ENCODE measurements at regions of chr1 and their contacts with region 1.

Region 1: GRCh38 chr1:207885129-207886032 is 25.5 kb downstream of the CD34 start:
- DNase-seq: peak; percentile 86
- ATAC-seq: peak; percentile 72
- H3K4me3 Mint-ChIP-seq: no peak overlapping the region
- H3K27ac Mint-ChIP-seq: peak overlapping the region; percentile 95
- H3K4me1 Mint-ChIP-seq: peaks cover 30% of the 10 kb centered on the region
- H3K27me3 Mint-ChIP-seq: peaks cover 2% of the 10 kb centered on the region
- CTCF ChIP-seq: peak; percentile 98

Region 2: GRCh38 chr1:207797229-207797961 is 88.0 kb before region 1 on chr1:
- CTCF ChIA-PET with region 1: interaction called, 14 read pairs
- POLR2A ChIA-PET with region 1: interaction called, 3 read pairs
- intact Hi-C with region 1: no loop called
- DNase-seq: peak; percentile 92
- ATAC-seq: peak; percentile 91
- H3K4me3 Mint-ChIP-seq: no peak overlapping the region
- H3K27ac Mint-ChIP-seq: peak overlapping the region; percentile 11
- H3K4me1 Mint-ChIP-seq: peaks cover 36% of the 10 kb centered on the region
- H3K27me3 Mint-ChIP-seq: no peaks in the 10 kb centered on the region
- CTCF ChIP-seq: peak; percentile 76

Region 3: DNA sequence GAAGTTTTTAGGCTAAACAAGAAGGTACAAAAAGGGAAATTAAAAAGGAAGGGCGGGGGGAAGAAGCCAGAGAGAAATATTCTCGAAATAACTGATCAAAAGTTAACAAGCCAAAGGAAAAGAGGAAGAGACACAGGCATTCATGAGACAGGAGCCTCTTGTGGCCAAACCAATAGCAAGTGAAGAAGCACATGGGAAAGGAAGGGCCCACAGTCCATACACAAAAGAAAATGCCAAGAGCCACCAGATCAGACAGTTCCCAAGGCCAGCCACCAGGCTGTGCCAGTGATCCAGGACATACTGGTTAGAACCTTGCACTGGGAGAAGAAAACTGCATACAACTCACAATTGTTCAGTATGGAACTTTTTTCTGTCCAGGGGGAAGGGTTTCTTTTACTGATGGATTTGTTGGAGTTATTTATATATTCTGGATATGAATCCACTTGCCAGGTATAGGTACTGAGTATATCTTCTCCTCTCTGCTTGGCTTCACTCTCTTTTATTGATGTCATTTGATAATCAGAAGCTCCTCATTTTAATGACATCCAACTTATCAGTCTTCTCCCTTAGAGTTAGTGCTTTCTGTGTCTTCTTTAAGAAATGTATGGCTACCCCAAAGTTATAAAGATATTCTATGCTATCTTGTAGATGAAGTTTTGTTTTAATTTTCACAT is 56.8 kb before region 1 on chr1:
- CTCF ChIA-PET with region 1: interaction called, 63 read pairs
- POLR2A ChIA-PET with region 1: interaction called, 14 read pairs
- intact Hi-C with region 1: no loop called
- DNase-seq: peak; percentile 73
- ATAC-seq: no peak
- H3K4me3 Mint-ChIP-seq: no peak overlapping the region
- H3K27ac Mint-ChIP-seq: peak overlapping the region; percentile 73
- H3K4me1 Mint-ChIP-seq: peaks cover 96% of the 10 kb centered on the region
- H3K27me3 Mint-ChIP-seq: no peaks in the 10 kb centered on the region
- CTCF ChIP-seq: peak; percentile 71

Region 4: DNA sequence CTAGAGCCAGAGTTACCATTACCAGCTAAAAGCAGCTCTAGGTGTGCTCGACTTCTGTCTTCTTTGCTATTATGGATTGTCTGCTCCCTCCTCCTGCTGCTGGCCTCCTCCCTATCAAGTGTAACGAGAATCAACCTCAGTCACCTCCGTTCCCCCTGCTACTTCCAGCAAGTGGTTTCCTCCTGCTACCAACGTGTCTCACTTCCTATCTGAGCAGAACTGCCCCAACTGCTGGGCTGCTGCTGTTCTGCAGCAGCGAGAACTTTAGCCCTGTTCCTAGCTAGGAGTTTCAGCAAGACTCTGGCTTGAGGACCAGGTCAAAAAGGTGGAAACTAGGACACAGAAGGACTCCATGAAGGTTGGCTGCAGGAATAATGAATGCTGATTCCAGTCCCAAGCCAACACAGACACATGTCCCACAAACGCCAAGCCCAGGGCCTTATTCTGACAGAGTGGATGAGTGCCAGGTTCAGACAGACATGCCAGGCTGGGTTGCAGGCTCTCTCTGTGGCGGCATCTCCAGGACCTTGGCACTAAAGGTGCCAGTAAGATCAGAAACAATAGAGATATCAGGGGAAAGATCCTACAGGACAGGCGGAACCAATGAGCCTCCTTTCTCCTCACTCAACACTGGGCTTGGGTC is 21.4 kb before region 1 on chr1:
- CTCF ChIA-PET with region 1: interaction called, 285 read pairs
- POLR2A ChIA-PET with region 1: interaction called, 12 read pairs
- intact Hi-C with region 1: no loop called
- DNase-seq: peak; percentile 70
- ATAC-seq: peak; percentile 57
- H3K4me3 Mint-ChIP-seq: peak overlapping the region; percentile 50
- H3K27ac Mint-ChIP-seq: peak overlapping the region; percentile 87
- H3K4me1 Mint-ChIP-seq: peaks cover 65% of the 10 kb centered on the region
- H3K27me3 Mint-ChIP-seq: no peaks in the 10 kb centered on the region
- CTCF ChIP-seq: peak; percentile 14

Region 5: DNA sequence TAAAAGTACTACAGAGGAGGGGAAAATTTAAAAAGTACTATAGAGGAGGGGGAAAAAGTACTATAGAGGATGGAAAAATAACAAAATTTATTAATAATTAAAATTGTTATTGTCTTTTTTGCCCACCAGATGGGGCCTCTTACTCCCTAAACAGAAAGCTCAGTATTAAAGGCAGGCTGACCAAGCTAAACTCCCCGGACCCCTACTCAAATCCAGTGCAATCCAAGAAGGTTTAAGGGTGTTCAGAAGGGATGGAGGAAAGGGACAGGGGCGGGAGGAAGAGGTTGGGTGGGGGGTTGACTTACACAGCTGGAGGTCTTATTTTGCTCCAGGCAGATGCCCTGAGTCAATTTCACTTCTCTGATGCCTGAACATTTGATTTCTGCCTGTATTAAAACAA is 11.8 kb after region 1 on chr1:
- CTCF ChIA-PET with region 1: interaction called, 87 read pairs
- POLR2A ChIA-PET with region 1: no interaction called
- intact Hi-C with region 1: no loop called
- DNase-seq: no peak
- ATAC-seq: no peak
- H3K4me3 Mint-ChIP-seq: no peak overlapping the region
- H3K27ac Mint-ChIP-seq: no peak overlapping the region
- H3K4me1 Mint-ChIP-seq: no peaks in the 10 kb centered on the region
- H3K27me3 Mint-ChIP-seq: no peaks in the 10 kb centered on the region
- CTCF ChIP-seq: no peak

Region 6: DNA sequence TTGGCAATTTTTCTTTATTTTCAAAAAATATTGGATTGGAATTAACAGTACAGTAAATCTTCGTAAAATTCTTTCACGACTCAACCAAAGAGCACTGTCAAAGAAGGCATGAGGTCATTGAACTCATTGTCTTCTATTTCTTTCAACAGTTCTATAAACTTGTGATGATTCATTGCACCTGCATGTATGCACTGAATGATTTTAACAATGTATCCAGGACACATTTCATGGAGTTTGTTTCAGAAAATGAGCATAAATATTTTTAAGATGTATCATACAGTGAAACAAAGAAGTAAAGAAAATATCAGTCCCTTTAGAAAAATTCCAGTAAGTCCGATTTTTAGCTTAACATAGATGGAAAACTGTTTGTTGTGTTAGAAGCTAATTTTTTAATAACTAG is 59.2 kb after region 1 on chr1:
- CTCF ChIA-PET with region 1: interaction called, 27 read pairs
- POLR2A ChIA-PET with region 1: interaction called, 3 read pairs
- intact Hi-C with region 1: no loop called
- DNase-seq: no peak
- ATAC-seq: no peak
- H3K4me3 Mint-ChIP-seq: no peak overlapping the region
- H3K27ac Mint-ChIP-seq: no peak overlapping the region
- H3K4me1 Mint-ChIP-seq: no peaks in the 10 kb centered on the region
- H3K27me3 Mint-ChIP-seq: peaks cover 11% of the 10 kb centered on the region
- CTCF ChIP-seq: no peak

Region 7: DNA sequence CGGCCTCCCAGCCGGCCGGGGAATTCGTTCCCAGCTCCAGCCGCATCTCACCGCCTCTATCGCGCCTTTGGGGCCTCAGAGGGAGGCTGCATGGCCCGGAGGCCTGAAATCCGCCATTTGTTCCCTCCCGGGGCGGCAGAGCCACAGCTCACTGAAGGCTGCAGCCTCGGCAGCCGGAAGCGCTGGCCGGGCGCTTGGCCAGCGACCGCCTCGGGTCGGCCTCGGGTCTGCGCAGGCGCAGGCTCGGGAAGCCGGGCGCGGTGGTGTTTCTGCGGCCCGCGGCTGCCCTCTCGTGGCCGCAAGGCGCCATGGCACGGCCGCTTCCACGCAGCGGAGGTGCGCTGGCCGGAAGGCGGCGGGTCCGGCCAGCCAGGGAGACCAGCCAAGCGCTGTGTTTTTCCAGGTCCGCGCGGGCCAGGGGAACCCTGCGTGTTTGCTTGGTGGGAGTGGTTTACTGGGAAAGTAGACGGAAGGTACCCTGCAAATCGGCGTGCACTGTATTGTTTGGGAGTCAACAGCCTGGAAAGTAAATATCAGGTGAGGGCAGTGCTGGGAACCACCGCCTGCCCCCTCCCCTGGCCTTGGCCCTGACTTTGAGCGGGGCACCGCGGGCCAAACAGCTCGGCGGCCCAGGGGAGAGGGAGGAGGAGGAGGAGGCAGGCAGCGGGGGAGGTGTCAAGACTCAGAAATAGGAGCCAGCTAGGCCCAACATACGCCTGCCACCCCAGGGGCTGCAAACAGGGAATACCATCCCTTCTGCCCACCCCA is 78.2 kb after region 1 on chr1:
- CTCF ChIA-PET with region 1: interaction called, 253 read pairs
- POLR2A ChIA-PET with region 1: no interaction called
- intact Hi-C with region 1: loop called (anchors 2 kb)
- DNase-seq: peak; percentile 85
- ATAC-seq: peak; percentile 91
- H3K4me3 Mint-ChIP-seq: peak overlapping the region; percentile 77
- H3K27ac Mint-ChIP-seq: peak overlapping the region; percentile 77
- H3K4me1 Mint-ChIP-seq: peaks cover 4% of the 10 kb centered on the region
- H3K27me3 Mint-ChIP-seq: peaks cover 22% of the 10 kb centered on the region
- CTCF ChIP-seq: peak; percentile 98